Posterior cingulate gyrus (tissue), 11 donors: ENCODE measurements at regions of chr7 and their contacts with region 1.

Region 1: GRCh38 chr7:131424219-131424822 is 96.6 kb downstream of the MKLN1 start:
- DNase-seq: no peak

Region 2: GRCh38 chr7:130369110-130369711 is 1055.1 kb before region 1 on chr7:
- intact Hi-C with region 1: no loop called
- DNase-seq: peak in 2 of 10 donors; percentile 8 to 35

Region 3: GRCh38 chr7:130896898-130897514 is 527.3 kb before region 1 on chr7:
- intact Hi-C with region 1: loop called (anchors 10 kb)
- DNase-seq: peak; percentile 73 to 98 (median 80)

Region 4: DNA sequence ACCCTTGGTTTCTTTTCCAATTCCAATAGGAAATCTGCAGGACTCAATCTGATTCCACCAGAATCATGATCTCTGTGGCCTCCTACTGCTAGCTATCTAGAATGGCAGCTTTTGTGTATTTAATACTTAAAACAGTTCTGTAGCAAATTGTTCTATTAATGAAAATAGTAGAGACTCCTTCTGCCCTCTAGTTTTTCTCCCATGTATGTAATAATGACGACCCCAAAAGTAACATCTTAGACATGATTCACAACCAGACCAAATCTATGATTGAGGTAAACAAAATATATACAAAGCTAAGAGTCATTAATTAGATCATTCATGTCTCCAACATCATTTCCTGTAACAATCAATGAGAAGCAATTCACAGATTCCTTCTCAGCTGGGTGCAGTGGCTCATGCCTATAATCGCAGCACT is 355.7 kb before region 1 on chr7:
- intact Hi-C with region 1: loop called (anchors 5 kb)
- DNase-seq: no peak

Region 5: DNA sequence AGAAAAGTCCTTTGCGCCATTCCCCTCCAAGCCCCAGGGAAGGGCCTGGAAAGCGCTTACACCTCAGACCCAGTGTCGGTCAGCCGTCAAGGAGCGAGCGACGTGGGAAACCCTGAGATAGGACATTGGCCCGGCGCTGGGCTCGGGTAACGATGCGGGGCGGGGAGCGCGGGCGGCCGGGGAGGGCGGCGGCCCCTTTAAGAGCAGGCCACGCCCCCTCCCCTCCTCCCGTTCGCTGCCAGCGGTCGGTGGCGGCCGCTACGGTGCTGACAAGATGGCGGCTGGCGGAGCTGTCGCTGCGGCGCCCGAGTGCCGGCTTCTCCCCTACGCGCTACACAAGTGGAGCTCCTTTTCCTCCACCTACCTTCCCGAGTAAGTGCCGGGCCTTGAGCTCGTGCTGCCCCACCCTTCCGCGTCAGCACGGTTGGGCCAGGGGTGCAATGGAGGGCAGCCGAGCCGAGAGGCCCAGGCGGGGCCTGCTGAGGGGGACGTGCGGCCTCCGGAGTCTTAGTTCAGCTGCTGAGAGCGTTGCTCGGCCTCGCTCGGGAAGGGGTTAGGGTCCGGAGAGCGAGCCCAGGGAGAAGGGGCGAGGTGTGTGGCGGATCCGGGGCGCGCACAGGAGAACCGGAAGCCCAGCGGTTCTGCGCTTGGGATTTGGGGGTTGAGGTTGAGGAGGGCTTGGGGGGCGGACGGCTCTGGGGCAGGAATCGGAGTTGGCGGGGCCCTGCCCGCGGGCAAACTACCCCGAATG is 96.5 kb before region 1 on chr7 and contains the start of gene MKLN1:
- intact Hi-C with region 1: loop called (anchors 5 kb)
- DNase-seq: peak; percentile 81 to 98 (median 87)

Region 6: GRCh38 chr7:131488361-131488760 is 64.0 kb after region 1 on chr7:
- intact Hi-C with region 1: no loop called
- DNase-seq: no peak

Region 7: GRCh38 chr7:131745390-131746248 is 321.3 kb after region 1 on chr7:
- intact Hi-C with region 1: no loop called
- DNase-seq: no peak